Activated CD4-positive, alpha-beta T cell treated with anti-CD3 and anti-CD28 coated beads for 36 hours (primary cell): ENCODE measurements at regions of chr11 and their contacts with region 1.

Region 1: GRCh38 chr11:8964324-8965320 is at the start of gene TMEM9B:
- DNase-seq: peak; percentile 90
- ATAC-seq: peak; percentile 87
- H3K4me3 Mint-ChIP-seq: peak within 1 kb of the TSS; percentile 81
- H3K27ac Mint-ChIP-seq: peak within 1 kb of the TSS; percentile 89
- H3K4me1 Mint-ChIP-seq: peaks cover 29% of the 10 kb centered on the region
- H3K27me3 Mint-ChIP-seq: no peaks in the 10 kb centered on the region
- total RNA-seq, gene TMEM9B: 9.9 to 13.1 TPM

Region 2: GRCh38 chr11:8225589-8226036 is 739.0 kb before region 1 on chr11:
- CTCF ChIA-PET with region 1: no interaction called
- POLR2A ChIA-PET with region 1: no interaction called
- intact Hi-C with region 1: loop called in 1 of 2 experiments (anchors 2 kb)
- DNase-seq: peak; percentile 82
- ATAC-seq: peak; percentile 70
- H3K4me3 Mint-ChIP-seq: no peak overlapping the region
- H3K27ac Mint-ChIP-seq: no peak overlapping the region
- H3K4me1 Mint-ChIP-seq: no peaks in the 10 kb centered on the region
- H3K27me3 Mint-ChIP-seq: no peaks in the 10 kb centered on the region

Region 3: DNA sequence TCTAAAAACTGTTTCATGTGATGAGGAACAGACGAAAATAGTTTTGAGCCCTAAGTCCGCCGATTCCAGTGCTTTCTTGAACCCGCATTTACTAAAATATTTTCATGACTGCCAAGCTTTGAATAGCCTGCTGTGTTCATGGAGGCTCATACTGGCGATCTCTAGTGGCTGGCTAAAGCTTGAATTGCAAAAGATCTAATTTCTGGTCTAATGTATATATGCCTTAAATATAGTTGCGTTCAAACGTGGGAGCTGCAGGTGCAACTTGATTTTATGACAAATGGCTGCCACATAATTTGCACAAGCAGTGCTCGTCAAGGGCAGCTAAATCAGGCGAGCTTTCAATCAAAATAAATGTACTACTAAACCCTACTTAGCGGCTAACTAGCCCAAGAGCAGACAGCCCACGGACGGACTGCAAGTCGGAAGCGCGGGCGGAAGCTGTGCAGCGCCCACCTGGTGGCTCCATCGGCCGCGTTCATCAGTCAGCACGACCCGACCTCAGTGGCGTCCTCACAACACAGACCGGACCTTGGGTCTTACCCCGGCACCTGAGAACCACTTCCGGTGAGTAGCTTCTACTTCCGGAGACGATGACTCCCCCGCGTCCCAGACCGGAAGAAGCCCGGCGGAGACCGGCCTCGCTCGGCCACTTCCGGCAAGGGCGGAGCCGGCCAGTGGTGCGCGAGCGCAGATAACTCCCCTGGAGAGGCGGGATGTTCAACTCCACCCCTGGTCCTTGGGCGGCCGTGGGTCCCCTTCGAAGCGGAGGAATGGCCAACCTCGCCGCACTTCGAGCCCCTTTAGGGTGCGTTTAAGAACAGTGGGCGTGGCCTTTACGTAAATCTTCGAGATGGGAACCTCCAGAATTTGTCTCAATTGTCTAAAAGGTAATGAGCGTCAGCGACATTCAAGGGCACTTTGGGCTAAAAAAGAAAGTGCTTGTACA is 275.9 kb before region 1 on chr11:
- CTCF ChIA-PET with region 1: no interaction called
- POLR2A ChIA-PET with region 1: no interaction called
- intact Hi-C with region 1: loop called (anchors 1 to 2 kb)
- DNase-seq: peak; percentile 92
- ATAC-seq: peak; percentile 90
- H3K4me3 Mint-ChIP-seq: peak overlapping the region; percentile 94
- H3K27ac Mint-ChIP-seq: peak overlapping the region; percentile 98
- H3K4me1 Mint-ChIP-seq: peaks cover 56% of the 10 kb centered on the region
- H3K27me3 Mint-ChIP-seq: no peaks in the 10 kb centered on the region

Region 4: DNA sequence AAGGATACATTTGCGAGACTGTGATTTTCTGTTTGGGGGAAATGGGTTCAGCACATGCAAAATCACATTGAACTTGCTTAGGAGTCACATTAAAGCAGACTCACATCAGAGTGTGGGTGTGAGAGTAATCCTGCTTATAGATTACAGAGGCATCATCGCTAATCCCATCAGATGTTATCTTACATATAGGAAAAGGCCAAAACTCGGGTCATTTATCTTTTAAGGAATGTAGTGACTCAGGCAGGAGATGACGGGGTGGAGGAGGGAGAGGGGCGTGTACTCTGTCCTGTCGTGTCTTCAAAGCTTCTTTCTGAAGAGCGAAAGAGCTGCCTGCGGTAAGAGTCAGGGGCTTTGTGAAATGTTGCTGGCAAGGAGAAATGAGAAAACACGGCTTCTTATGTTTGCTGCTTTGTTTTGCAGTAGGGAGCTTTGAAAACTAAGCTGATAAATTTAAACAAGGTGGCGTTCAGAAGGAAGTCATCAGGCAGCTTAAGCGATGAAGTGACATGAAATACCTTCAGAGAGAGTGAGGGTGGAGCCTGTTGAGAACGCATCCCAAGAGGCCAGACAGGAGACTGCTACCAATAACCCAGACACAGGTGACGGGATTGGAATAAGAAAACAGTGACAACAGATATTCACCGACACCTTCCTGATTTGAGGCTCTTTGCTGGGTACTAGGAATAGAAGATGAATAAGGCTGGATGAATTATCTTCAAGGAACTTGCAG is 29.7 kb before region 1 on chr11:
- CTCF ChIA-PET with region 1: interaction called, 22 read pairs
- POLR2A ChIA-PET with region 1: interaction called, 4 read pairs
- intact Hi-C with region 1: no loop called
- DNase-seq: no peak
- ATAC-seq: peak; percentile 30
- H3K4me3 Mint-ChIP-seq: no peak overlapping the region
- H3K27ac Mint-ChIP-seq: no peak overlapping the region
- H3K4me1 Mint-ChIP-seq: no peaks in the 10 kb centered on the region
- H3K27me3 Mint-ChIP-seq: no peaks in the 10 kb centered on the region

Region 5: GRCh38 chr11:9137293-9138132 is 172.9 kb after region 1 on chr11:
- CTCF ChIA-PET with region 1: interaction called, 25 read pairs
- POLR2A ChIA-PET with region 1: no interaction called
- intact Hi-C with region 1: loop called in 1 of 2 experiments (anchors 1 kb)
- DNase-seq: peak; percentile 86
- ATAC-seq: peak; percentile 88
- H3K4me3 Mint-ChIP-seq: no peak overlapping the region
- H3K27ac Mint-ChIP-seq: peak overlapping the region; percentile 79
- H3K4me1 Mint-ChIP-seq: peaks cover 35% of the 10 kb centered on the region
- H3K27me3 Mint-ChIP-seq: no peaks in the 10 kb centered on the region

Region 6: GRCh38 chr11:9384535-9385303 is 420.1 kb after region 1 on chr11 and contains the start of gene IPO7:
- CTCF ChIA-PET with region 1: no interaction called
- POLR2A ChIA-PET with region 1: no interaction called
- intact Hi-C with region 1: loop called in 1 of 2 experiments (anchors 2 kb)
- DNase-seq: peak; percentile 96
- ATAC-seq: peak; percentile 98
- H3K4me3 Mint-ChIP-seq: peak within 1 kb of the TSS; percentile 96
- H3K27ac Mint-ChIP-seq: peak within 1 kb of the TSS; percentile 96
- H3K4me1 Mint-ChIP-seq: peaks cover 26% of the 10 kb centered on the region
- H3K27me3 Mint-ChIP-seq: no peaks in the 10 kb centered on the region
- total RNA-seq, gene IPO7: 155 to 181 TPM